Thyroid gland (tissue), 4 donors: ENCODE measurements at regions of chr4 and their contacts with region 1.

Region 1: DNA sequence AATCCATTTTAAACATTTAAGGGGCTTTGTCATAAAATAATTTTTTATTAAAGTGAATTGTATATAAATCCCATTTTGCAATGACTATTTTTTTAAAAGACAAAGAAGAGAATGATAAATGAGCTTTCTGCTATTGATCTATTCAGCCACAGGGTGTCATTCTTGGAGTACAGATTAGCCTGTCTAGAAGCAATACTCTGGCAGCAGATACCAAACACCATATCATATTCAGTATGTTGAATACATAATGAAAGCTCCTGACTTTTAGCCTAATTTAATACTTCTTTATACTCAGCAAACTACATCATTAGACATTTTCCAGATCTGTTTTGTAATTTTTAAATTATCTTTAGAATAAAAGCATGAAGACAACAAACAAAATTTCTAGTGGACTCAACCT is 496.3 kb downstream of the PDGFC start:
- DNase-seq: no peak
- H3K4me3 ChIP-seq: no peak overlapping the region
- H3K27ac ChIP-seq: no peak overlapping the region
- H3K4me1 ChIP-seq: no peaks in the 10 kb centered on the region
- H3K27me3 ChIP-seq: no peaks in the 10 kb centered on the region
- CTCF ChIP-seq: peak in 5 of 6 experiments; percentile 13 to 80 (median 60)
- POLR2A ChIP-seq: no peak

Region 2: GRCh38 chr4:156280686-156281085 is 194.6 kb before region 1 on chr4:
- intact Hi-C with region 1: no loop called
- DNase-seq: no peak
- H3K4me3 ChIP-seq: no peak overlapping the region
- H3K27ac ChIP-seq: no peak overlapping the region
- H3K4me1 ChIP-seq: no peaks in the 10 kb centered on the region
- H3K27me3 ChIP-seq: no peaks in the 10 kb centered on the region
- CTCF ChIP-seq: no peak
- POLR2A ChIP-seq: no peak

Region 3: GRCh38 chr4:156677131-156677531 is 201.8 kb after region 1 on chr4:
- intact Hi-C with region 1: loop called (anchors 5 kb)
- DNase-seq: peak in 1 of 2 donors; percentile 1
- H3K4me3 ChIP-seq: no peak overlapping the region
- H3K27ac ChIP-seq: no peak overlapping the region
- H3K4me1 ChIP-seq: no peaks in the 10 kb centered on the region
- H3K27me3 ChIP-seq: no peaks in the 10 kb centered on the region
- CTCF ChIP-seq: peak in 4 of 6 experiments; percentile 36 to 64 (median 49)
- POLR2A ChIP-seq: no peak

Region 4: DNA sequence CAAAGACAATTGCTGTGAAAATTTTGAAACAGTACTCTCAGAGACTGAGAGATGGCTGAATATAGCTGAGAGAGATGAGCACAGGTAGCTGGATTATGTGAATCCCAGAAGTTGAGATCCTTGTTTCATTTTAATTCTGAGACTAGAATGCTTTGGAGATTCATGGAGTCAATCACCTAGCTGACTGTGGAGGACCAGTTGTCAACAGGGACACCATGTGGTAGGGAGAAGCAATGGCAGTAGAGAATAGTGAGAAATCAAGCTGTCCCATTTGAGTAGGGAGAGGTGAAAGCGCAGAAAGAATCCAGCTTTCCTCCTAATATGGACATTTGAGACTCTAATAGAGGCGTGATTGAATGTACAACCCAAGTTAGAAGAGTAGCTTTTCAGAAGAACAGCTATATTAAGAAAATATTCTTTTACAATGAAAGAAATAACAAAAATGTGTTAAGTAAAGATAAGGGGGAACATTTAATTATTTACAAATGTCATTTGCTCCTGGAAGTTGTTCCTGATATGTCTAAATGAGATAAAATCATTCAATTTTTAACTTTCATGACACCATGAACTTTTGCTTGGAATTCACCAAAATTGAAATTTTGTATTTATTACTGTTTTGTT is 570.3 kb after region 1 on chr4:
- intact Hi-C with region 1: loop called (anchors 5 kb)
- DNase-seq: peak; percentile 21 to 26
- H3K4me3 ChIP-seq: no peak overlapping the region
- H3K27ac ChIP-seq: no peak overlapping the region
- H3K4me1 ChIP-seq: no peaks in the 10 kb centered on the region
- H3K27me3 ChIP-seq: no peaks in the 10 kb centered on the region
- CTCF ChIP-seq: peak; percentile 26 to 89 (median 76)
- POLR2A ChIP-seq: no peak